ENCODE measurements at regions of chr1 and their contacts with region 1.

Region 1: GRCh38 chr1:147815498-147815897 is 55.1 kb upstream of the GJA5 start:
- DNase-seq: no peak
- H3K4me3 ChIP-seq: no peak overlapping the region
- H3K27ac ChIP-seq: no peak overlapping the region
- H3K4me1 ChIP-seq: no peaks in the 10 kb centered on the region
- H3K27me3 ChIP-seq: no peaks in the 10 kb centered on the region
- CTCF ChIP-seq: peak in 1 of 2 donors; percentile 4

Region 2: DNA sequence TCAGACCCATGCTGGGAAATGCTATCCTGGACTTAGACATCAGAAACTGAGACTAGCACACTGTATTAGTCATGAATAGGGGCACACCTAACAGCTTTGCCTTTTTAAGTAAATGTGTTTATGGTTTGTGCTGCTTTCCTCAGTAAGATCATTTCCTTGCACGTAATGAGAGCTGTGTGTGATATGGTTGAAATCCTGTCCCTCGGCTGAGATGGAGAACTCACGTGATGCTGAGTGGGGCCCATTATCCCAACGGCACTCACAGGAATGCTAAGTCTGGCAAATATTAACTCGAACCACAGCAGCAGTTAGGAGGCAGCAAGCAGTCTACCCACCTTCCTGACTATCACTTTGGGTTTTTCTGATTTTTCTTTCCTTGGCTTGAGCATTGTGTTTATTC is 236.0 kb before region 1 on chr1:
- CTCF ChIA-PET with region 1: no interaction called
- dilution Hi-C with region 1: no loop called
- in situ Hi-C with region 1: no loop called
- intact Hi-C with region 1: no loop called
- DNase-seq: no peak
- H3K4me3 ChIP-seq: no peak overlapping the region
- H3K27ac ChIP-seq: no peak overlapping the region
- H3K4me1 ChIP-seq: no peaks in the 10 kb centered on the region
- H3K27me3 ChIP-seq: peaks cover 10% of the 10 kb centered on the region
- CTCF ChIP-seq: no peak

Region 3: GRCh38 chr1:147748676-147749350 is 66.7 kb before region 1 on chr1:
- CTCF ChIA-PET with region 1: no interaction called
- dilution Hi-C with region 1: loop called (anchors 5 kb)
- in situ Hi-C with region 1: no loop called
- intact Hi-C with region 1: no loop called
- DNase-seq: peak; percentile 45
- H3K4me3 ChIP-seq: no peak overlapping the region
- H3K27ac ChIP-seq: no peak overlapping the region
- H3K4me1 ChIP-seq: peaks cover 36% of the 10 kb centered on the region
- H3K27me3 ChIP-seq: no peaks in the 10 kb centered on the region
- CTCF ChIP-seq: no peak

Measured in mammary epithelial cell (primary cell).